Endothelial cell of umbilical vein (primary cell): ENCODE measurements at regions of chr11 and their contacts with region 1.

Region 1: GRCh38 chr11:65274735-65275682 is 13.2 kb downstream of the POLA2 start:
- DNase-seq: peak; percentile 97
- H3K4me3 ChIP-seq: no peak overlapping the region
- H3K27ac ChIP-seq: peak overlapping the region; percentile 92
- H3K4me1 ChIP-seq: peaks cover 39% of the 10 kb centered on the region
- H3K27me3 ChIP-seq: no peaks in the 10 kb centered on the region
- CTCF ChIP-seq: peak; percentile 60 to 83
- POLR2A ChIP-seq: peak; percentile 48

Region 2: GRCh38 chr11:65261591-65262380 is 13.2 kb before region 1 on chr11 and contains the start of gene POLA2:
- CTCF ChIA-PET with region 1: interaction called, 14 read pairs
- POLR2A ChIA-PET with region 1: no interaction called
- dilution Hi-C with region 1: no loop called
- intact Hi-C with region 1: no loop called
- DNase-seq: peak; percentile 97
- H3K4me3 ChIP-seq: peak within 1 kb of the TSS; percentile 65 to 83 (median 82)
- H3K27ac ChIP-seq: peak within 1 kb of the TSS; percentile 79
- H3K4me1 ChIP-seq: peaks cover 11% of the 10 kb centered on the region
- H3K27me3 ChIP-seq: no peaks in the 10 kb centered on the region
- CTCF ChIP-seq: no peak
- POLR2A ChIP-seq: peak; percentile 98
- total RNA-seq, gene POLA2: 24.0 and 25.4 TPM in 2 replicates

Region 3: DNA sequence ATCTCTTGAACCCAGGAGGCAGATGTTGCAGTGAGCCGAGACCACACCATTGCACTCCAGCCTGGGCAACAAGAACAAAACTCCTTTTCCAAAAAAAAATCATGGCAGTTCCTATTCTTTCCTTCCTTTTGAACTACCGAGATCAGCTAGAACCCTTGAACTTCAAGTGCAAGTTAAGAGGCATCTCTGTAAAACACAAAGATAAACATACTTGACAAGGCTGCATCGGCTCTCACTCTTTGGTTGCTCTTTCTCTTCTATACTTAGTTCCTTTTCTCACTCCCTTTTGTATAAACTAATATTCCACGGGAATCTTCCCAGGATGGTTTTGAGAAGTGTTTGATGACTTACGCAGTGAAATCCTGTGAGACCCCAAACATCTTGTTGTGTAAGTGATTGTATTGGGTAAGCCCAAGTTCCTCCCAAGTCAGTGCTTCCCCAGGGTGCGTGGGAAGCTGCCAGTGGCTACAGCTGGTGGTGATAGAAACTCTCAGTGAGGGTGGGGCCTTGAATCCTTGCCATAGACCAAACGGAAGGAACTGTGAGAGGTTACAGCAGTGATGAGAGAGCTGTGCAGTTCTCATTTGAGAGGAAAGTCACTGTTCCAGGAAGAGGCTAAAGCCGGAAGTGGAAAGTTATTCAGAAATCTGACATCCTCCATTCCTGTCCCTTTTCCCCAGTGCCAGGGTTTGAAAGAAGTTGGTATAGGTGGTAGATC is 15.6 kb after region 1 on chr11:
- CTCF ChIA-PET with region 1: interaction called, 39 read pairs
- POLR2A ChIA-PET with region 1: interaction called, 5 read pairs
- dilution Hi-C with region 1: no loop called
- intact Hi-C with region 1: loop called (anchors 1 kb)
- DNase-seq: peak; percentile 87
- H3K4me3 ChIP-seq: no peak overlapping the region
- H3K27ac ChIP-seq: peak overlapping the region; percentile 35
- H3K4me1 ChIP-seq: peaks cover 29% of the 10 kb centered on the region
- H3K27me3 ChIP-seq: no peaks in the 10 kb centered on the region
- CTCF ChIP-seq: no peak
- POLR2A ChIP-seq: peak; percentile 57

Region 4: DNA sequence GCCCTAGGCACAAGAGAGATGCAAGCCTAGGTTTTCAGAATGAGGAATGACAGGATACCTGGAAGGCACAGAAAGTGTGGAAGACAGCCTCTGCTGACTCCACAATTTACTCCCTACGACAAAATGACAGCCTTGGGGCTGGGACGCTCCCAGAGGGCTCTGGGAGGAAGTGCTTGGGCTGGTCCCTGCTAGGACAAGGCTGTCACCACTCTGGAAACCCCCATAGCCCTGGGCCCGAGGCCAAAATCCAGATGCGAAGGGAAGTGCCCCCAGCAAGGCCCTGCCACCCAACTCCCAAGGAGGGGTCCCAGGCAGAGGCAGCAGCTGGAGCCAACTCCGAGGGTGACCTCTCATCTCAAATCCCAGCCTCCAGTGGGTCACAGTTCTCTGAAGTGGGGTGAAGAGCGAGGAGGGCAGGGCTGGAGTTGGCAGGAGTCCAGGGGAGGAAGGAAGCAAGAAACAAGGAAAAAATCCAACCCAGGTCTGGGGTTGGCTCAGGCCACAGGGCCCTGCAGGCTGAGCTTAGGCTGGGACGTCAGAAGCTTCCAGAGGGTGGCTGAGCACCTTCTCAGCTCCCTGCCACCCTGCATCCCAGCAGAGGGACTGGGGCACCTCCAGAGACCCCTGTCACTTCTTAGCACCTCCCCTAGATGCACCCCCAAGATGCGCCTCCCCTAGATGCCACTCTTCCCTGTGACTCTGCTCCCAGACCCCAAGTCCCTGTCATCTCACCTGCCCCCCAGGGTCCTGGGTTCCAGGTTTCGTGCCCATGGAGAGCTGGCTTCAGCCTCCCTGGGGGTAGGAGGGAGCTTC is 33.5 kb after region 1 on chr11:
- CTCF ChIA-PET with region 1: interaction called, 625 read pairs
- POLR2A ChIA-PET with region 1: interaction called, 4 read pairs
- dilution Hi-C with region 1: no loop called
- intact Hi-C with region 1: no loop called
- DNase-seq: peak; percentile 58
- H3K4me3 ChIP-seq: no peak overlapping the region
- H3K27ac ChIP-seq: peak overlapping the region; percentile 52
- H3K4me1 ChIP-seq: peaks cover 18% of the 10 kb centered on the region
- H3K27me3 ChIP-seq: no peaks in the 10 kb centered on the region
- CTCF ChIP-seq: no peak
- POLR2A ChIP-seq: no peak

Region 5: GRCh38 chr11:65321828-65322485 is 46.9 kb after region 1 on chr11:
- CTCF ChIA-PET with region 1: interaction called, 625 read pairs
- POLR2A ChIA-PET with region 1: interaction called, 65 read pairs
- dilution Hi-C with region 1: no loop called
- intact Hi-C with region 1: no loop called
- DNase-seq: no peak
- H3K4me3 ChIP-seq: no peak overlapping the region
- H3K27ac ChIP-seq: no peak overlapping the region
- H3K4me1 ChIP-seq: peaks cover 10% of the 10 kb centered on the region
- H3K27me3 ChIP-seq: no peaks in the 10 kb centered on the region
- CTCF ChIP-seq: no peak
- POLR2A ChIP-seq: no peak

Region 6: DNA sequence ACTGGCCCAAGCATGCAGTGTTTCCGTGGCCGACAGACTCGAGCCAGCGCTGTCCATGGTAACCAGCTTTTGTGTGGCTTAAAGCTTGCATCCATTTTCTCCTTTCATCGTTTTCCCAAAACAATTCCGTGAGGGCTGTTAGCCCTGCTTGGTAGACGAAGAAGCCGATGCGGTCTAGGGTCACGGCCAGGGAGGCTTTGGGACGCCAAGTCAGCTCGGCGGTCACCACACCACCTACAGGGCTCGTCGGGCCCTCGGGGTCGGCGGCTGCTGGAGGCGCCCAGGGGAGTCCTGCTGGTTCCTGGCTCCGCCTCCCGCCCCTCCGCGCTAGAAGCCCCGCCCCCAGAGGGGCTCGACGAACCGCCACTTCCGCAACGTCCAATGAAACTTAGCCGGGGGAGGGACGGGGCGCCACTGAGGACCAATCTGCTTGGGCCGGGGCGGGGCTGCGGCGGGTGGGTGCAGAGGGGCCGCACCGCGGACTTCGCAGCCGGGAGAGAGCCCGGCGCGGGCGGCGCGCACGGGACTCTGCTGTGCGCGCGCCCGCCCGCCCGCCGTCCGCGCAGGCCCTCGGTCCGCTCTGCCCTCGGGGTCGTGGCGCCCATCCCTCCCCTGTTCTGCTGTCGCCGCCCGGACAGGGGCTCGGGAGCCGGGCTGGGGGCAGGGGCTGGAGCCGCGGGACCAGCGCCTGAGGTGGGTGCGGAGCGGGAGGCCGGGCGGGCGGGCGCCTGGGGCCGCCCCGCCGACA is 79.4 kb after region 1 on chr11 and contains the start of gene TIGD3:
- CTCF ChIA-PET with region 1: interaction called, 52 read pairs
- POLR2A ChIA-PET with region 1: interaction called, 3 read pairs
- dilution Hi-C with region 1: no loop called
- intact Hi-C with region 1: loop called (anchors 1 kb)
- DNase-seq: peak; percentile 98
- H3K4me3 ChIP-seq: peak within 1 kb of the TSS; percentile 29 to 51 (median 47)
- H3K27ac ChIP-seq: no peak within 1 kb of the TSS
- H3K4me1 ChIP-seq: peaks cover 14% of the 10 kb centered on the region
- H3K27me3 ChIP-seq: peaks cover 5 to 6% of the 10 kb centered on the region in 2 experiments
- CTCF ChIP-seq: no peak
- POLR2A ChIP-seq: peak; percentile 79
- total RNA-seq, gene TIGD3: 0.27 TPM in 1 of 2 replicates, not detected in the other